Activated naive CD4-positive, alpha-beta T cell treated with anti-CD3 and anti-CD28 coated beads for 36 hours (primary cell): ENCODE measurements at regions of chr5 and their contacts with region 1.

Region 1: GRCh38 chr5:168836603-168837231 is 257.5 kb upstream of the PANK3 start:
- DNase-seq: peak; percentile 53
- H3K4me3 Mint-ChIP-seq: peak overlapping the region; percentile 46
- H3K27ac Mint-ChIP-seq: peak overlapping the region; percentile 73
- H3K4me1 Mint-ChIP-seq: peaks cover 31% of the 10 kb centered on the region
- H3K27me3 Mint-ChIP-seq: peaks cover 18% of the 10 kb centered on the region

Region 2: DNA sequence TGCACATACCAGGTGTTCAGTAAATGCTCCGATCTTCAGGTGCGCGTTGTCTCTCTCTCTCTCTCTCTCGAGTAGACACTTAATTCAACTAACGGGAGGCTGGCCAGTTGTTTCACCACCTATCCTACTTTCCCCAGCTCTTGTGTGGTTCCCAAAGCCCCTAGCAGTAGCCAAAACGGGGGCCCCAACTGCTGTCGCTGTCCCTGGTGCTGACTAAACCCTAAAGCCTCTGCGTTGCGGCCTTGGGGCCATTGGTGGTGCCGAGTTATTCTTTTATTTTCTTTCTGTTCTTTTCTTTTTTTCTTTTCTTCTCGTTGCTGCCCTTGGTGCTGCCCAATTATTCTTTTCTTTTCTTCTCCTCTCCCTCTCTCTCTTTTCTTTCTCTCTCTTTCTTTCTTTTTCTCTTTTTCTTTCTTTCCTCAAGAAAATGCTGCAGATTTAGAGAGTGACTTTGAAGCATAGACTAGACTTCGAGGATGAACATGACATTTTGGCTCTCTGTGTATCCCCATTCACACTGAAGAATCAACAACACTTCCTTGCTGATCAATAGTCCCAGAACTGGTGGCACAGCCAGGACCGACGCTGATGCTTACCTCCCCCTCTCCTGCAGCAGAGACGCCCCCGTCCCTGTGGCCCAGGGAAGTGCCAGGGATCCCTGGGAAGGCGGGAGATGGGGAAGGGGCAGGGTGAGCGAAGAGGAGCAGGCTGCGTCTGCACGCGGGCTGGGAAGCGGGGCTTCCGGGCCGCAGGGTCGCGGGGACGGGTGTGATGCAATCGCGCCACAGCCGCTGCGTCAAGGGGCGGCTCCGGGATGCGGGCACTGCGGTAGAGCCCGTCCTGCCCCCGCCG is 308.0 kb before region 1 on chr5 and contains the start of gene FBLL1:
- CTCF ChIA-PET with region 1: no interaction called
- intact Hi-C with region 1: no loop called
- DNase-seq: peak; percentile 51
- H3K4me3 Mint-ChIP-seq: peak within 1 kb of the TSS; percentile 67
- H3K27ac Mint-ChIP-seq: no peak within 1 kb of the TSS
- H3K4me1 Mint-ChIP-seq: peaks cover 12% of the 10 kb centered on the region
- H3K27me3 Mint-ChIP-seq: peaks cover 40% of the 10 kb centered on the region
- total RNA-seq, gene FBLL1: 0.21 TPM in 1 of 2 experiments, not detected in the other

Region 3: DNA sequence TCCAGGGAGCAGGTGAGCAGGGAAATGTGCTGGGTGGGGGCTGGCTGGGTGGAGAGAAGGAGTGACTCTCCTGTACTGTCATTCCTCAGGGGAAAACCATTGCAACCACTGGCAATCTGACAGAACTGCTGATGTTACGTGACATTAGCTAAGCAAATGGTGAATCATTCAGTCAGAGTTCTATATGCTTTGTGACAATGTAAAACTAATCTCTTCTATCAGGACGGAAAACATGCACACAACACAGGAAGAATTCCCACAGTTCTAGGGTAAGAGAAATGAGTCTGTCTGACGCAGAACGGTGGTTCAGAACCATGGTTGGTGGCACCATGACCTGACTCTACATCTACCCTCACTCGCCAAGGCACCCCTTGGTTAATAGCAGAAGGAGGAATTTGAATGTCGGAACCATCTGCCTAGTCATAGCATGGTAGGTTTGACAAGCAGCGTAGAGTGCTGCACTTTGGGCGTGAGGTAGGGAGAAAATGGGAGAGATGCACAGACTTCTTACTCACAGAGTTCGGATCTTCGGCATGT is 13.9 kb before region 1 on chr5:
- CTCF ChIA-PET with region 1: interaction called, 3 read pairs
- intact Hi-C with region 1: loop called (anchors 1 kb)
- DNase-seq: peak; percentile 44
- H3K4me3 Mint-ChIP-seq: peak overlapping the region; percentile 7
- H3K27ac Mint-ChIP-seq: peak overlapping the region; percentile 34
- H3K4me1 Mint-ChIP-seq: peaks cover 21% of the 10 kb centered on the region
- H3K27me3 Mint-ChIP-seq: peaks cover 11% of the 10 kb centered on the region

Region 4: DNA sequence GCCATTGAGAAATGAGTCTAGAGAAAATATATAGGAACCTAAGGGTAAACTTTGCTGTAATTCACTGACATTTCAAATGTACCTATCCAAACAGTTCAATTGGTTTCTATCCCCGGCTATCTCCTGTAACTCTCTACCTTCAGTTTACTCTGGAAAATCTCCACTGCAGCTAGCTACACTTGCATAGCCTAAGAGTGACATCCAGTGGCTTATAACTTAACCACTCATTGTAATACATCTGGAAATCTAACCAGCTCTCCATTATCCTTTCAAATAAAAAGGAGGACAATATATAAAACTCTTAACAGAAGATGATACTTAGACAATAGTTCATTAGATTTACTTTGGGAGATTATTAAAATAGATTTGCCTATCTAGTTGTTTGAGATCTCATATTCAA is 711.6 kb after region 1 on chr5:
- CTCF ChIA-PET with region 1: no interaction called
- intact Hi-C with region 1: loop called (anchors 1 kb)
- DNase-seq: no peak
- H3K4me3 Mint-ChIP-seq: no peak overlapping the region
- H3K27ac Mint-ChIP-seq: no peak overlapping the region
- H3K4me1 Mint-ChIP-seq: peaks cover 9% of the 10 kb centered on the region
- H3K27me3 Mint-ChIP-seq: peaks cover 59% of the 10 kb centered on the region

Region 5: GRCh38 chr5:169706758-169707691 is 870.3 kb after region 1 on chr5:
- CTCF ChIA-PET with region 1: no interaction called
- intact Hi-C with region 1: loop called (anchors 5 kb)
- DNase-seq: no peak
- H3K4me3 Mint-ChIP-seq: no peak overlapping the region
- H3K27ac Mint-ChIP-seq: peak overlapping the region; percentile 76
- H3K4me1 Mint-ChIP-seq: peaks cover 42% of the 10 kb centered on the region
- H3K27me3 Mint-ChIP-seq: no peaks in the 10 kb centered on the region